ENCODE measurements at regions of chr16 and their contacts with region 1.

Region 1: DNA sequence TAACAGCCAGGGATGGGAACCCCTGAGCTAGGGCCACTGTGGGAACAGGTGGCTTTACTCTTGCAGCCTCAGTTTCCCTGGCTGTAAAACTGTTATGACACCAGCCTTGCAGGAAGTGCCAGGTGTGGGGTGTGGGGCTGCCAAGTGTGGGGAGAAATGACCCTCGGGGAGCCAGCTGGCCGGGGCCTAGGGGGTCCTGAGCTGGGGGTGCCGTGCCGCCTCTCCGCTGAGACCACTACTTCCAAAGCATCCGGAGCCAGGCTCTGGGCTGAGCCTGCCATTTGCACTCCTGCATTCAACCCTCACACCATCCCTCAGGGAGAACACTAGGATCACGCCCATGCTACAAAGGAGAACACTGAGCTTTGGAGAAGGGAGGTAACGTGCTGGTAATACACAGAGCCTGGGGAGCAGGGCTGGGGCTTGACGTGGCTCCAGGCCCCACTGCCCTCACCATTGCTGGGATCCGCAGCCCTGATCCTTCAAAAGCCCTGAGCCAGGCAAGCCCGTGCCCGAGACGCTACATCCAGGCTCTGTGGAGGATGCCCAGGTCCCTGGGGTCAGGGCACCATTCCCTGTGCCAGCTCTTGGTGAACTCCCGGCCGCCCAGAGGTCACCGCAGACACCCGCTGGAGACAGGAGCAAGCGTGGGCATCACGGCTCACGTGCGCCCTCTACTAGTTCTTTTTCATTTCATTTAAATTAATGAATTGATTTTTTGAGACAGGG is 28.8 kb upstream of the GINS2 start:
- DNase-seq: peak; percentile 74 to 91 (median 83)
- H3K4me3 ChIP-seq: no peak overlapping the region
- H3K27ac ChIP-seq: no peak overlapping the region
- H3K4me1 ChIP-seq: peaks cover 0 to 5% of the 10 kb centered on the region in 2 donors
- H3K27me3 ChIP-seq: no peaks in the 10 kb centered on the region
- CTCF ChIP-seq: peak; percentile 70 to 90 (median 79)
- POLR2A ChIP-seq: no peak

Region 2: GRCh38 chr16:85275533-85276249 is 441.9 kb before region 1 on chr16:
- intact Hi-C with region 1: loop called in 1 of 2 experiments (anchors 10 kb)
- DNase-seq: peak; percentile 68 to 85 (median 77)
- H3K4me3 ChIP-seq: no peak overlapping the region
- H3K27ac ChIP-seq: peak overlapping the region in 3 of 5 donors; percentile 76 to 94 (median 88)
- H3K4me1 ChIP-seq: peaks cover 26 to 44% of the 10 kb centered on the region in 2 donors
- H3K27me3 ChIP-seq: no peaks in the 10 kb centered on the region
- CTCF ChIP-seq: peak; percentile 82 to 97 (median 90)
- POLR2A ChIP-seq: no peak

Region 3: GRCh38 chr16:85393674-85394483 is 323.7 kb before region 1 on chr16:
- intact Hi-C with region 1: loop called in 1 of 2 experiments (anchors 10 kb)
- DNase-seq: peak in 6 of 7 donors; percentile 35 to 59 (median 57)
- H3K4me3 ChIP-seq: no peak overlapping the region
- H3K27ac ChIP-seq: peak overlapping the region in 2 of 5 donors; percentile 76 to 84
- H3K4me1 ChIP-seq: peaks cover 37 to 60% of the 10 kb centered on the region in 2 donors
- H3K27me3 ChIP-seq: no peaks in the 10 kb centered on the region
- CTCF ChIP-seq: peak; percentile 54 to 77 (median 67)
- POLR2A ChIP-seq: no peak

Region 4: DNA sequence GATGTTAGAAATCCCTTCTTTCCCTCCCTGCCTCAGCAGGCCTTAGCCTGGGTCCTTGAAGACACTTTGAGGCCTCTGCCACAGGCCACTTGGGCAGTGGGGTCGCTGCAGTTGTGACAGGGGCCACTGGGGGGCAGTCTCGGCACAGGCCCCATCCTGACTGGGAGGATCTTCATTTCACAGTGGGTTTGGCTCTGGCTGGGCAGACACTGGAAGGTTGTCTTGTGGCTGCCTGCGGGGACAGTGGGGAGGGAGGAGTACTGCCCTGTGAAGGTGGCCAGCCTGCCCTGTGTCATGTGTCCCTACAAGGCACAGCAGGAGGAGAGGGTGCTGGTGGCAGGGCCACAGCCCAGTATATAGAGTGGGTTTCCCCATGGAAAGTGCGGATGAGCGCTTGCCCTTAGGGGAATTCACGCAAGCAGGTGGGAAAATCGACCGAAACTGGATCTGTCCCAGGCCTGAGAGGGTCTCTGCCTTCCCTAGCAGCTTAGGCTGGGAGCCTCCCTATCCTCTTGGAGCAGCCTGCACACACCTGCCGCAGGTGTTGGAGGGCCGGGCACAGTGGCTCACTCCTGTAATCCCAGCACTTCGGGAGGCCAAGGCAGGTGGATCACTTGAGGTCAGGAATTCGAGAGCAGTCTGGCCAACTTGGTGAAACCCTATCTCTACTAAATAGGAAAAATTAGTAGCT is 57.6 kb before region 1 on chr16:
- intact Hi-C with region 1: loop called (anchors 5 kb)
- DNase-seq: peak; percentile 77 to 95 (median 88)
- H3K4me3 ChIP-seq: no peak overlapping the region
- H3K27ac ChIP-seq: peak overlapping the region in 2 of 5 donors; percentile 40 to 59
- H3K4me1 ChIP-seq: peaks cover 4 to 15% of the 10 kb centered on the region in 2 donors
- H3K27me3 ChIP-seq: no peaks in the 10 kb centered on the region
- CTCF ChIP-seq: peak; percentile 84 to 92 (median 90)
- POLR2A ChIP-seq: no peak